Activated CD4-positive, alpha-beta T cell treated with anti-CD3 and anti-CD28 coated beads for 36 hours (primary cell): ENCODE measurements at regions of chr12 and their contacts with region 1.

Region 1: DNA sequence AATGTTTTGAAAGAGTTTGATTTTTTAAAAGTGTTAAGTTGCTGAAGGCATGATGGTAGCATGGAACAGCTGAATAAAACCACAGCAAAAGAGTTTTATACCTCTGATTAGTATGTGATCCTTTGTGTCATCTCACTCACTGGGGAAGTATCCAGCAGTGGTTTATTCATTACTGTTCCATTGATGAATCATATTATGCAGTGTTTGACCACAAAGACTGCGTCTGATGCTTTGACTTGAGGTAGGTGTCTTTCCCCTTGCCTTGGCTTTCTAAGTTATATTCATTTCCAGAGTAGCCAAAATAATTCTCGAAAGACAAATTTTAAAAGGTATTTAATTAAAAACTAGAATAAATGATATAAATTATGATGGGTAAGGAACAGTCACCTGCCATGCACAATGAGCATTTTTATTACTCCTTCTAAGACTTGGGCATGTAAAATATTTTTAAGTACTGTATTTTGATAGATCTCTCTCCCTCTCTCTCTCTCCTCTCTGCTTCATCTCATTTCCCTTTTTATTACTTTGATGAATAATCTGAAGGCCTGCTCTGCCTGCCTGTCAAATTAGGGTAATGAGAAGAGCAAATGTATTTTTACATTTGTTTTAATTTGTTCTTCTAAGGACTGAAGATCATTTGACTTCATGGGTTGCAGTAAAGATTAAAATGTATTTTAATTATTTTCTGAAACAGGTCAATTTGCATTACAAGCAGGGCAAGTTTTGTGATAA is 164.9 kb downstream of the NAV3 start:
- DNase-seq: no peak
- ATAC-seq: peak; percentile 74
- H3K4me3 Mint-ChIP-seq: no peak overlapping the region
- H3K27ac Mint-ChIP-seq: no peak overlapping the region
- H3K4me1 Mint-ChIP-seq: no peaks in the 10 kb centered on the region
- H3K27me3 Mint-ChIP-seq: no peaks in the 10 kb centered on the region

Region 2: DNA sequence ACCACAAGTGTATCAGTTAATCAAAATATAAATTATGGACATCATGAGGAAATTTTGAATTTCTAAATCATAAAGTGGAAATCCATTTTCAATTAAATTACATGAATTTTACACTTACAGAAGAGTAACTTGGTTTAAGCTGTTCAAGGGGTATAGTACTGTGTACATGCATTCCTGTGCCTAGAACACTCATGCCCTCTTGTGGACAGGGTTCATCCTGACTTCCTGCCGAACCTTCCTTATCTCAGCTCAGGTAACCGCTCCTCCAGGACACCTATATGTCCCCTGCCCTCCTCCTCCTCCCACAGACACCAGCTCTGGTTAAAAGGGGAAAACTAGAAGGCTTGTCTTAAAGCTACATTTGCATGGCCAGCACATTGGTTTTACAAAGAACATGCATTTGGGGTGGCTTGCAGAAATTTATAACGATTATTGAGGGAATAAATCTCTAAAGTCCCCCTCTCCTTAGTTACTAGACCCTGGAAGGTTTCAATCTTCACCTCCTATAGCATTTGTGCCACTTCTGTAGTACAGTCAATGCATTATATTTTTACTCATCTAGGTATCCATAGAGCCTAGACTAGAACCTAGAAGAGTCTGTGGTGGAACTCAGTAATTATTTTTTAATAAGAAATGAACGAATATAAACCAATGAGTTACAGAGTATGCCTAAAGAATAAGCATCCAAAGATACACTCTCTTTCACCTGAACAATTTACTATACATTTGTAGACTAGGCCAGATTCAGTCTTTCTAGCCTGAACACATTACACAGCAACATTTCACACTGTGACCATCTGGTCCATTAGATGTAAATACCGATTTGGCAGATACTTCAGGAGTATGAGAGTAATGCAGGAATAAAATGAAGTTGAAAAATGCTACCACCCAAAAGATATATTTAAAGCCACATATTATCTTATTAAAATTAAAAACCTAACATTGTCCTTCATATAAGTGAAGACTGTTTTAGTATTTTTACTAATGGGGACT is 1349.5 kb after region 1 on chr12:
- CTCF ChIA-PET with region 1: no interaction called
- POLR2A ChIA-PET with region 1: no interaction called
- intact Hi-C with region 1: loop called in 1 of 2 experiments (anchors 2 kb)
- DNase-seq: peak; percentile 19
- ATAC-seq: peak; percentile 30
- H3K4me3 Mint-ChIP-seq: no peak overlapping the region
- H3K27ac Mint-ChIP-seq: no peak overlapping the region
- H3K4me1 Mint-ChIP-seq: no peaks in the 10 kb centered on the region
- H3K27me3 Mint-ChIP-seq: no peaks in the 10 kb centered on the region

Region 3: GRCh38 chr12:79615596-79616560 is 1620.3 kb after region 1 on chr12:
- CTCF ChIA-PET with region 1: no interaction called
- POLR2A ChIA-PET with region 1: no interaction called
- intact Hi-C with region 1: no loop called
- DNase-seq: no peak
- ATAC-seq: no peak
- H3K4me3 Mint-ChIP-seq: no peak overlapping the region
- H3K27ac Mint-ChIP-seq: no peak overlapping the region
- H3K4me1 Mint-ChIP-seq: no peaks in the 10 kb centered on the region
- H3K27me3 Mint-ChIP-seq: no peaks in the 10 kb centered on the region